ENCODE measurements at regions of chr9 and their contacts with region 1.

Region 1: GRCh38 chr9:128504485-128505413 is at the start of gene GLE1:
- DNase-seq: peak; percentile 94 to 97
- H3K4me3 ChIP-seq: peak within 1 kb of the TSS; percentile 99
- H3K4me3 Mint-ChIP-seq: peak within 1 kb of the TSS; percentile 96
- H3K27ac Mint-ChIP-seq: peak within 1 kb of the TSS; percentile 97
- H3K4me1 ChIP-seq: peaks cover 16% of the 10 kb centered on the region
- H3K4me1 Mint-ChIP-seq: no peaks in the 10 kb centered on the region
- H3K27me3 ChIP-seq: no peaks in the 10 kb centered on the region
- H3K27me3 Mint-ChIP-seq: no peaks in the 10 kb centered on the region
- CTCF ChIP-seq: no peak
- total RNA-seq, gene GLE1: 30.4 and 30.8 TPM in 2 replicates

Region 2: DNA sequence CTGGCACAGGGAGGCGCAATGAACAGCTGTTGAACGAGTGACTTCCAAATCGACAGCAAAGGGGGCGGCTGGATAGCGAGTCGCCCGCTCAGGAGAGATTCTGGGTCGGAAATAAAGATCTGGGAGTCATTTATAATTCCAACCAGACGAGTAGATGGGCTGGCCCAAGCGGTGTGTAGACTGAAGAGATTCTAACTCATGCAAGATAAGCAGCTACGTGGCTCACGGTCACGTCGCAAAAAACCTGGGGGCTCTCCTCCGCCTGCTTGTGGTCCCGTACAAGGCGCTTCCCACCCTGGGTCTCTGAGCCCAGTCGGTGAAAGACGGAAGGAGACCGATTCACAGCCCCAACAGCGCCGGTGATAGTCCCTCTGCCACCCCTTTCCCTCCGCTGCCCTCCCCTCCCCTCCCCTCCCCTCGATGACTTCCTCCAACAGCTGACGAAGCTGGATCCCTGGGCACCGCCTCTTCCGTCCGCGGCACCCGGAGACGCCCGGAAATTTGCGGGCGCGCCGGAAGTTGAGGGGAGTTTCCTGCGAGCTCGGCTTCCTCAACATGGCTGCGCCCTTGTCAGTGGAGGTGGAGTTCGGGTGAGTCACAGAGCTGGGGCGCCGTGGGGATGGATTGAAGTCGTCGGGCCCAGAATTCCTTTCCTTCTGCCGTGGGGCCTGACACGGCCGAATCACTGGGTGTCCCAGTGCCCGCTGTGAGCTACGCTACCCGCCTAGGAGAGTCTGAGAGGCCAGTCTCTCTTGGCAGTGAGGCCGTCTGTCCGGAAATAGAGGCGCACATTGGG is 133.7 kb before region 1 on chr9 and contains the start of gene URM1:
- CTCF ChIA-PET with region 1: no interaction called
- POLR2A ChIA-PET with region 1: no interaction called
- intact Hi-C with region 1: loop called (anchors 10 kb)
- DNase-seq: peak; percentile 93 to 94
- H3K4me3 ChIP-seq: peak within 1 kb of the TSS; percentile 100
- H3K4me3 Mint-ChIP-seq: peak within 1 kb of the TSS; percentile 79
- H3K27ac Mint-ChIP-seq: peak within 1 kb of the TSS; percentile 71
- H3K4me1 ChIP-seq: peaks cover 12% of the 10 kb centered on the region; the same call in 1 of the 2 replicates
- H3K4me1 Mint-ChIP-seq: peaks cover 14% of the 10 kb centered on the region
- H3K27me3 ChIP-seq: no peaks in the 10 kb centered on the region
- H3K27me3 Mint-ChIP-seq: no peaks in the 10 kb centered on the region
- CTCF ChIP-seq: no peak
- total RNA-seq, gene URM1: 55.9 and 62.7 TPM in 2 replicates

Region 3: DNA sequence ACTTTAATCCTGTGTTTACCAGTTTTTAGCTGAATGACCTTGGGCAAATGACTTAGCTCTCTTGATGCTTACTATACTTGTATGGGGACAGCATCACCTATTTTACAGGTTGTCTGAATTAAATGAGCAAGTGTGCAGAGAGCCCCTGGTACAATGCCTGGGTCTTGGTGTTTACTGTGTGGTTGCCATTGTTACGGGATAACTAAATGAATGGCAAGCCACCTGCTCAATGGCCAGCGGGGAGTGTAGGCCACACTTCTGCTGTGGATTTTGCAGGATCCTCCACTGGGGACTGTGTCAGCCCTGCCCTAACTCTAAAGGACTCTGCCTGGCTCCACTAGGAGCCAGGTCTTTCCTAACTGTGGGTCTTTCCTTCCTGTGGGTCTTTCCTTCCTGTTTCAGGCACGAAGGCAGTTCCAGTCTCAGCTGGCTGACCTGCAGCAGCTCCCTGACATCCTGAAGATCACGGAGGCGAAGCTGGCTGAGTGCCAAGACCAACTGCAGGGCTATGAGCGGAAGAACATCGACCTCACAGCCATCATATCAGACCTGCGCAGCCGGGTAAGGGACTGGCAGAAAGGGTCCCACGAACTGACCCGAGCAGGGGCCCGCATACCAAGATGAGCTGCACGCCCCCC is 10.5 kb before region 1 on chr9:
- CTCF ChIA-PET with region 1: no interaction called
- POLR2A ChIA-PET with region 1: no interaction called
- intact Hi-C with region 1: no loop called
- DNase-seq: no peak
- H3K4me3 ChIP-seq: no peak overlapping the region
- H3K4me3 Mint-ChIP-seq: no peak overlapping the region
- H3K27ac Mint-ChIP-seq: no peak overlapping the region
- H3K4me1 ChIP-seq: no peaks in the 10 kb centered on the region
- H3K4me1 Mint-ChIP-seq: no peaks in the 10 kb centered on the region
- H3K27me3 ChIP-seq: no peaks in the 10 kb centered on the region
- H3K27me3 Mint-ChIP-seq: no peaks in the 10 kb centered on the region
- CTCF ChIP-seq: no peak

Region 4: GRCh38 chr9:128552153-128552743 is 47.5 kb after region 1 on chr9 and contains the start of gene SPTAN1:
- CTCF ChIA-PET with region 1: no interaction called
- POLR2A ChIA-PET with region 1: interaction called, 11 read pairs
- intact Hi-C with region 1: loop called (anchors 2 kb)
- DNase-seq: peak; percentile 88 to 92
- H3K4me3 ChIP-seq: peak within 1 kb of the TSS; percentile 93
- H3K4me3 Mint-ChIP-seq: no peak within 1 kb of the TSS
- H3K27ac Mint-ChIP-seq: no peak within 1 kb of the TSS
- H3K4me1 ChIP-seq: peaks cover 37% of the 10 kb centered on the region
- H3K4me1 Mint-ChIP-seq: peaks cover 12% of the 10 kb centered on the region
- H3K27me3 ChIP-seq: no peaks in the 10 kb centered on the region
- H3K27me3 Mint-ChIP-seq: no peaks in the 10 kb centered on the region
- CTCF ChIP-seq: no peak
- total RNA-seq, gene SPTAN1: 407 and 408 TPM in 2 replicates